ENCODE measurements at regions of chr15 and their contacts with region 1.

Region 1: DNA sequence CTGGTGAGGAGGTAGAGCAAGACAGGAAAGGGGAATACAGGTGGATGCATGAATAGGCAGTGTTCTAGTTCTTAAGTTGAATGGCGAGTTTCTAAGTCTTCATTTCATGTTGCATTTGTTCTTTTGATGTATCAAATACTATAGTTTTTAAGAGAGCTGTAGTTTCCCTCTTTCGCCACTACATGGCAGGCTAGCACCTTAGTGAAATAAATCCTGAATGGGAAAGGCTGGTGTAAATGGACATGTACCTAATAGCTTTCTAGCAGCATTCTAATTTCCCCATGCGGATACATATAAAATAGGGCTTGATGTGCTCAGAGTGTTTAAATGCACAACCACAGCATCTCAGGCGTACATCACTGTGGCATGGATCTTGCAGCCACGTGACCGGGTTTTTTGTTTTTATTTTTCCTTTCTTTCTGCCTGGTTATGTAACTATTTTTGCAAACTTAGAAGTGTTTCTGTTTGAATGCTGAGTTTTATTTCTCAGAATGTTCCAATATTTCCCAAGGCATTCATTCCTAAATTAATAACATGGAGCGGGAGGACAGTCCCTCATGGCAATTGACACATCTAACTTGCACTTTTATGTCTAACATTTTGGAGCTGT is 23.5 kb upstream of the CLN6 start:
- H3K4me3 ChIP-seq: no peak overlapping the region
- H3K27ac ChIP-seq: no peak overlapping the region
- H3K4me1 ChIP-seq: 0 out of 2 replicates have a peak, but pooled peaks cover 2% of the 10 kb centered on the region
- CTCF ChIP-seq: peak; percentile 80

Region 2: GRCh38 chr15:68106656-68107055 is 146.4 kb before region 1 on chr15:
- CTCF ChIA-PET with region 1: no interaction called
- POLR2A ChIA-PET with region 1: no interaction called
- H3K4me3 ChIP-seq: no peak overlapping the region
- H3K27ac ChIP-seq: no peak overlapping the region
- H3K4me1 ChIP-seq: no peaks in the 10 kb centered on the region
- CTCF ChIP-seq: no peak

Region 3: GRCh38 chr15:68241088-68241935 is 11.7 kb before region 1 on chr15:
- CTCF ChIA-PET with region 1: interaction called, 11 read pairs
- POLR2A ChIA-PET with region 1: no interaction called
- H3K4me3 ChIP-seq: no peak overlapping the region
- H3K27ac ChIP-seq: no peak overlapping the region
- H3K4me1 ChIP-seq: peaks cover 3% of the 10 kb centered on the region; the same call in 1 of the 2 replicates
- CTCF ChIP-seq: no peak

Region 4: DNA sequence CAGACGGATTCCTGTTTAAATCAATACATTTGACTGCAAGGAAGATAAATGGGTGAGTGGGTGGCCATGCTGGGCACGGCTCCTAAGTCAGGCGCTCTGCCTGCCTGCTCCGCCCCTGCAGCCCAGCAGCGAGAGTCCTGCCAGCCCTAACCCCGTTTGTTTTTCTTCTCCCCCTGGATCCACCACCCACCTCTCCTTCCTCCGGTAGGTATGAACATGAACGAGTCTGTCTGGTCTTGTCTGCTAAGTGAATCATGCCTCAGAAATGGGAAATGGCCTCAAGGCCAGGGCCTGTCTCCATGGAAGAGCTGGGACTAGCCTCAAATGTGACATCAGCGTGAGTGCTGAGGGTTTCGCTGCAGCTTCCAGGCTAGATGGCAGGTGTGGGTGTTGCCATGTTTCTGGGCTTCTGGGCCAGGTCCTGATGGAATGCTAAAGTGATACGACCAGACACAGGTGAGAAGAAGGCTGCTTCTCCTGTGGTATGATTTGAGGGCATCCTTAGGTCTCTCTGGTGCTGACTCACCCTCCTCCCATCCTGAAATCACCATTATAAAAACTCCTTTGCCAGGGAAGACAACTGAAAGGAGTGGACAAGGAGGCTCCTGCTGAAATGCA is 18.9 kb after region 1 on chr15:
- CTCF ChIA-PET with region 1: interaction called, 21 read pairs
- POLR2A ChIA-PET with region 1: interaction called, 12 read pairs
- H3K4me3 ChIP-seq: peak overlapping the region; percentile 6; the same call in 1 of the 2 replicates
- H3K27ac ChIP-seq: peak overlapping the region; percentile 58
- H3K4me1 ChIP-seq: peaks cover 11% of the 10 kb centered on the region
- CTCF ChIP-seq: no peak

Region 5: GRCh38 chr15:68295014-68295805 is 42.2 kb after region 1 on chr15:
- CTCF ChIA-PET with region 1: interaction called, 29 read pairs
- POLR2A ChIA-PET with region 1: no interaction called
- H3K4me3 ChIP-seq: no peak overlapping the region
- H3K27ac ChIP-seq: no peak overlapping the region
- H3K4me1 ChIP-seq: peaks cover 6% of the 10 kb centered on the region; the same call in 1 of the 2 replicates
- CTCF ChIP-seq: no peak

Region 6: GRCh38 chr15:68550481-68551295 is 297.7 kb after region 1 on chr15:
- CTCF ChIA-PET with region 1: interaction called, 28 read pairs
- POLR2A ChIA-PET with region 1: no interaction called
- H3K4me3 ChIP-seq: no peak overlapping the region
- H3K27ac ChIP-seq: no peak overlapping the region
- H3K4me1 ChIP-seq: no peaks in the 10 kb centered on the region
- CTCF ChIP-seq: peak; percentile 78

Measured in HEK293 (cell line).